Activated naive CD4-positive, alpha-beta T cell treated with anti-CD3 and anti-CD28 coated beads for 36 hours (primary cell): ENCODE measurements at regions of chr5 and their contacts with region 1.

Region 1: GRCh38 chr5:172454358-172455086 is at the start of gene SH3PXD2B:
- DNase-seq: peak; percentile 49
- H3K4me3 Mint-ChIP-seq: peak within 1 kb of the TSS; percentile 74
- H3K27ac Mint-ChIP-seq: no peak within 1 kb of the TSS
- H3K4me1 Mint-ChIP-seq: peaks cover 15% of the 10 kb centered on the region
- H3K27me3 Mint-ChIP-seq: peaks cover 24% of the 10 kb centered on the region
- total RNA-seq, gene SH3PXD2B: 1.1 to 1.3 TPM

Region 2: DNA sequence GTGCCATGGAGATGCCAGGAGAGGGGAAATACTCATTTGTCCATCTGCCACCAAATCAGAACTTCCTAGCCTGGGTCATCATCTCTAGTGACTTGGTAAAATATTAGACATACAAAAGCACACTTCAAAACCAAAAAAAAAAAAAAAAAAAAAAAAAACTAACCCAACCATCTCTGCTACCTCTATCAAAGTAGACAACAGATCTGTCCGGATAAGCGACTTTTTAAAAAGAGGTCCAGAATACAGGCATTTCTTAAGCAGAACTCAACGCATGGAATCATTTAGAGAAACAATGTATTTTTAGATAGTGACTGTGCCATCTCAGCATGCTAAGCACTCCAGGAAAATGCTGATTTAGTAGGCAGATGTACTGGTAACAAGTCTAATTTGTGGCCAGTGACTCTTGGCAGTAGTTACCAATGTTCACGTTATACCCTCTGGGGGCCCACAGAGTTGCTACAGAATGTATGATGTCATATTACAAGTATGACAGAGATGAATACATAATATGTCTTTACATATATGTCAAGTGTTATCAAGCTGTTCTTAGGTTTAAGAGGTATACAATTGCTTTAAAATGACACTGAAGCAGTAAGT is 561.1 kb before region 1 on chr5:
- CTCF ChIA-PET with region 1: no interaction called
- intact Hi-C with region 1: no loop called
- DNase-seq: no peak
- H3K4me3 Mint-ChIP-seq: no peak overlapping the region
- H3K27ac Mint-ChIP-seq: no peak overlapping the region
- H3K4me1 Mint-ChIP-seq: peaks cover 15% of the 10 kb centered on the region
- H3K27me3 Mint-ChIP-seq: no peaks in the 10 kb centered on the region

Region 3: GRCh38 chr5:172334196-172334595 is 120.3 kb before region 1 on chr5:
- CTCF ChIA-PET with region 1: interaction called, 4 read pairs
- intact Hi-C with region 1: loop called (anchors 1 kb)
- DNase-seq: peak; percentile 38
- H3K4me3 Mint-ChIP-seq: no peak overlapping the region
- H3K27ac Mint-ChIP-seq: no peak overlapping the region
- H3K4me1 Mint-ChIP-seq: no peaks in the 10 kb centered on the region
- H3K27me3 Mint-ChIP-seq: no peaks in the 10 kb centered on the region

Region 4: DNA sequence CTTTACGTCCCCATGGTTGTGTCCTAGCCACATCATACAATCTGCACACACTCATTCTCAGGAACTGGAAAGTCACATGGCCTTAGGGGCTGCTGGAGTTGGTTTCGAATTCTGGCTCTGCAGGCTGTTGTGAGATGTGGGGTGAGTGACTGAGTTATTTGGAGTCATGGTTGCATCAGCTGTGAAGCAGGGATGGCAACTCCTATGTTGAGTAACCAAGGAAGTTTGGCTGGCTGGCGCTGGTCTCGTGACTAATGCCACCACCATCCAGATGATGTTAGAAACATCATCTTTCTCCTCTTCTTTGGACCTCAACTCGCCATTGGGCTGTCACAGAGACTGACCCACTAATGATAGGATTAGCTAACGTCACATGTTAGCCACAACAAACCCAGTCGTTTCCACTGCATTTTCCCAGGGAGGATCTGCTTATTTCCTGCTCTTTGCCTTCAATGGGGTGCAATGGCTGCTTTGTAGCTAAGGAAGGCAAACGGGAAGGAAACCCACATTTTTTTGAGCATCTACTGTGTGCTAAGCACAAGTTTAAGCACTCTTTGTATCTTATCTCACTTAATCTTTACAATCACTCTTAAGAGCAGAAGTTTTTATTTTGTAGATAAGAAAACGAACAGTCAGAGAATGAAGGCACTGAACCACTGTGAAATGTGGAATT is 92.8 kb before region 1 on chr5:
- CTCF ChIA-PET with region 1: no interaction called
- intact Hi-C with region 1: loop called (anchors 5 kb)
- DNase-seq: peak; percentile 82
- H3K4me3 Mint-ChIP-seq: no peak overlapping the region
- H3K27ac Mint-ChIP-seq: peak overlapping the region; percentile 83
- H3K4me1 Mint-ChIP-seq: peaks cover 8% of the 10 kb centered on the region
- H3K27me3 Mint-ChIP-seq: no peaks in the 10 kb centered on the region

Region 5: DNA sequence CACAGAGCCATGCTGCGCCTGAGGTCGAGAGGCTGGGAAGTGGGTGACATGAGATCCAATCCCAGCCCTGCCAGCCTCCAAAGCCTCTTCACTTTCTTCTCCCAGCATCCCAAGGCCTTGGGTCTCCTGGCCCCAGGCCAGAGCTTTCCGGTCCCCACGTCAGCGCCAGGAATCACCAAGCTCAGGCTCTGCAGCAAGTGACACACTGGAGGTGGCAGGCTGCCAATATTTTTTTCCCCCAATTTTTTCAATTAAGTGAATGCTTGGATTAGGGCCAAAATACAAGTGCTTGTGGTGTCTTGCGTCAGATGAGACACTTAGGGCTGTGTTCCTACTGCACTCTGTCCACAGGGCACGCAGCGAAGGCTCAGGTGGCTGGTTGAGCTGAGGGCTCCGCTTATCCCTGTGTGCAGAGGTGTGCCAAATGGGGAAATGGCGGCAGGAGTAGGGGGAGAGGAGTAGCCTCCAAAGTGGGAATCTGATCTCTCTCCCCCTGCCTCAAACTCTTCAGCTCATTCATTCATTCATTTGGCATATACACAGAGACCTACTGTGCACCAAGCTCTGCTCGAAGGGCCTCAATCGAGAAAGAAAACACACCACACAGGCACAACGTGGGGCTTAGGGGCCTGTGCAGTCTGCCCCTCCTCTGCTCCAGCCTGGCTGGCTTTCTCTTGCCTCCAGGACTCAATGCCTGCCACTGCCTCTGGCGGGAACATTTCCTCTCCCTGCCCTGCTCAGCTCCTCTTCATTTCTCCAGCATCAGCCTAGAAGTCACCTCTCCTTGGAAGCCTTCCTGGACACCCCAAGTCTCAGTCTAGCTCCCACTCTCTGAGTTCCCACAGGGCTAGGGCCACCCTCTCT is 16.8 kb before region 1 on chr5:
- CTCF ChIA-PET with region 1: interaction called, 18 read pairs
- intact Hi-C with region 1: no loop called
- DNase-seq: no peak
- H3K4me3 Mint-ChIP-seq: no peak overlapping the region
- H3K27ac Mint-ChIP-seq: no peak overlapping the region
- H3K4me1 Mint-ChIP-seq: no peaks in the 10 kb centered on the region
- H3K27me3 Mint-ChIP-seq: no peaks in the 10 kb centered on the region